ENCODE measurements at regions of chr4 and their contacts with region 1.

Region 1: GRCh38 chr4:112765317-112765975 is 128.5 kb downstream of the LARP7 start:
- DNase-seq: no peak
- H3K4me3 ChIP-seq: no peak overlapping the region
- H3K27ac ChIP-seq: no peak overlapping the region
- H3K27me3 ChIP-seq: no peaks in the 10 kb centered on the region
- CTCF ChIP-seq: peak; percentile 55

Region 2: DNA sequence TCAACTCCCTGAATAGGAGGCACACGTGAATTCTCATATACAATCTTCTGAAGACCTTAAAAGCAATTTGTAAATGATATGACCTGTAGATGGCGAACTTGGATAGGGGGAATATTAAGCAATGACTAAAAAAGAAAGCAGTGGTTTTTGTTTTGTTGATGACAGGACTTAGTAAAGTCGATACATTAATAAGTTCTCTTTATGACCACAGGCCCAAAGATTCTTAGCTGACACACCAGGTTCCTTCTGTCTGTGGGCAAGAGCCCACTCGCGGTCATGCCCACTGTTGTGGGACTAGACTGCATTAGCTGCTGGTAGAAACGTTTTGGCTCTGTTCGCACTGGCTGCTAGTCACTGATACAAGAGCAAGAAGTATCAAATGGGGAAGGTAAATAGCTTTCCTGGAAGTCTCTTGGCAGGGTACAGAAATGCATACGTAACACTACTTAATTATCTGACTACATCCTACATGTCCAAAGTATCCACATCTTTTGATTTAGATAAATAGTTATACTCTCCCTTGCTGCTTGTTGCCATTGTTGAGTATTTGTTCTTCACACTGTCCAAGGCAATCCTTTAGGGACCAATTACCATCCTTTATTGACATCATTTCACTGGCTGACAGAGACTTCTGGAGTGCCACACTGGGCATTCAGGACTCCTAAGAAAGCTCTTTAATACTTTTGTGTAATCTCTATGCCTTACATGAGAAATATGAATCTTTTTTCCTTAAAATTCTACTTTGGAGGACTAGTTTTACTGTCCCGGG is 437.3 kb before region 1 on chr4:
- CTCF ChIA-PET with region 1: interaction called, 17 read pairs
- POLR2A ChIA-PET with region 1: no interaction called
- DNase-seq: peak; percentile 29
- H3K4me3 ChIP-seq: no peak overlapping the region
- H3K27ac ChIP-seq: no peak overlapping the region
- H3K27me3 ChIP-seq: no peaks in the 10 kb centered on the region
- CTCF ChIP-seq: peak; percentile 69

Region 3: DNA sequence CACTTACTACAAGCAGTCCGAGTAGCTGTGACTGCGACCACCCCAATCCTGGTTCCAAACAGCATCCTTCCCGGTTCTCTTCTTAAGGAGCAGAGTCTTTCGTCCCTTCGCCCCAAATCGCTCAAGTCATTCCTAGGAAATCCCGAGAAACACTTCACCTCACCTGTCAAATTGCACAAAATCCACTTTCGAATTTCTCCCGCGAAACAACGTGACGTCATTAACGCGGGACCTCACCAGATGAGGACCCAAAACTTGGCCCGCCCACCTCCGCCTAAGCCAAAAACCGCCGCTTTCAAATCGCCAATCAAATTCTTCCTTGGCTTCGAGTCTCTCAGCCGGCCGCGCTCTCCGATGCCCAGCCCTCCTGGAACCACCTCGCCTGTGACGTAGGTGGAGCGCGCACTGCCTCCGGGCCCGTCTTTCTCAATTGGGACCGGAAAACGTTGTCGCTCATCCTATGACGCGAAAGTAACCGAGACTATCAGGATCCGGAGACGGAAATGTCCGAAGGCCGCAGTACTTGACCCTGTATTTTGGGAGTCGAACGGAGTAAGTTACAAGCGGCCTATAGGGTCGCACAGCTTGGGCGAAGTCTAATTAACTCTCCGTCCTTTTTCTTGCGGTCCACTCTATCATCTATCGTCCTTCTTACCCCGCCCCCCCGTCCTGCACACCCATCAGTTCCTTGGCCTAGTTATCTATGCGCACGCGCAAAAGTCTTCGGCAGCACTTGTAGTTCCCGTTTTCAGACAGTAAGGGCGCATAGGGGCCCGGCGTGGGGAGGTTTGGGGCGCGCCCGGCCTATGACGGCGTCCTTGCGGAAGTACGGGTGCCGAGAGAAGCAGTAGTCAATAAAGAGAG is 128.5 kb before region 1 on chr4 and contains the starts of genes LARP7 and ZGRF1:
- CTCF ChIA-PET with region 1: interaction called, 18 read pairs
- POLR2A ChIA-PET with region 1: no interaction called
- DNase-seq: peak; percentile 97
- H3K4me3 ChIP-seq: peak within 1 kb of the TSS; percentile 91
- H3K27ac ChIP-seq: peak within 1 kb of the TSS; percentile 96
- H3K27me3 ChIP-seq: no peaks in the 10 kb centered on the region
- CTCF ChIP-seq: peak; percentile 82
- polyA plus RNA-seq, gene LARP7: 22.8 and 44.2 TPM in 2 replicates
- polyA plus RNA-seq, gene ZGRF1: 1.4 and 2.0 TPM in 2 replicates

Region 4: DNA sequence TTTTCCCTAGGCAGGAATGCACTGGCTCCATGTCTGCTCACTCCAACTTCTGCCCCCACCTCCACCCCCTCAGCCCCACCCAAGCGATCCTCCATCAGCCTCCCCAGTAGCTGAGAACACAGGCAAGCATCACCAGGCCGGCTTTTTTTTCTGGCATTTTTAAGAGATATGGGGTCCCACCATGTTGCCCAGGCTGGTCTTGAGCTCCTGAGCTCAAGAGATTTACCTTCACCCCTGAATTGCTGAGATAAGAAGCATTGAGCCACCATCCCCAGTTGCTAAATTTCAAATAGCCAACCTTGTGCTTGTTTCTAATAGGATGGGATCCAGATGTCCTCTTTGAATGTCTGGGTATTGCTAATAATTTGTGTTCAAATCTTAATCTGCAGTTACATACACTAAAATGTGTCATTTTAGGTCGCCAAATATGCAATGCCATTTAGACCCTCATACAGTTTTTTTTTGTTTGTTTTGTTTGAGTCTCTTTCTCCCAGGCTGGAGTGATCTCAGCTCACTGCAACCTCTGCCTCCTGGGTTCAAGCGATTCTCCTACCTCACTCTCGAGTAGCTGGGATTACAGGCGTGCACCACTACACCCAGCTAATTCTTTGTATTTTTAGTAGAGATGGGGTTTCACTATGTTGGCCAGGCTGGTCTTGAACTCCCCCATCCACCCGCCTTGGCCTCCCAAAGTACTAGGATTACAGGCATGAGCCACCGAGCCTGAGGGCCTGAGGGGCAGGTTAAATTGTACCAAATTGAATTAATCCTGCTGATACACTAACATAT is 119.7 kb before region 1 on chr4:
- CTCF ChIA-PET with region 1: interaction called, 12 read pairs
- POLR2A ChIA-PET with region 1: no interaction called
- DNase-seq: no peak
- H3K4me3 ChIP-seq: no peak overlapping the region
- H3K27ac ChIP-seq: no peak overlapping the region
- H3K27me3 ChIP-seq: no peaks in the 10 kb centered on the region
- CTCF ChIP-seq: no peak

Region 5: DNA sequence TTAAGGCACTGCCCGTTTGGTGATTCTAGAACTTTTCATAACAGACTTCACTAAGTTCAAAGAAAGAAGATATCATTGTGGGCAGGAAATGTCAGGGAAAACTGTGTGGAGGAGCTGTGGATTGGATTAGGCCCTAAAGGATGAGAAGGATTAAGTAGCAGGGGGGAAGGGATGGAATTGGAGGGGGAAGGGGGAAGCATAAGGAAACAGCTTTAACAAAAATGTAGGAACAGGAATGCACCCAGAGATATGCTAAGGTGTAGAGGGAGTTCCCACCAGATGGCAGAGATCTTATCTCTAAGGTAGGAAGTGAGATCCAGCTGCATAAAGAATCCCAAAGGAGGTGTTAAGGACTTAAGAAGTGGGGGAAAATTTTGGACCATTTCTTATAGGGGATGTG is 14.0 kb before region 1 on chr4:
- CTCF ChIA-PET with region 1: interaction called, 10 read pairs
- POLR2A ChIA-PET with region 1: no interaction called
- DNase-seq: no peak
- H3K4me3 ChIP-seq: no peak overlapping the region
- H3K27ac ChIP-seq: no peak overlapping the region
- H3K27me3 ChIP-seq: no peaks in the 10 kb centered on the region
- CTCF ChIP-seq: no peak

Region 6: GRCh38 chr4:112775801-112776200 is 10.4 kb after region 1 on chr4:
- CTCF ChIA-PET with region 1: interaction called, 15 read pairs
- POLR2A ChIA-PET with region 1: no interaction called
- DNase-seq: no peak
- H3K4me3 ChIP-seq: no peak overlapping the region
- H3K27ac ChIP-seq: no peak overlapping the region
- H3K27me3 ChIP-seq: no peaks in the 10 kb centered on the region
- CTCF ChIP-seq: no peak

Region 7: GRCh38 chr4:112951362-112952312 is 186.2 kb after region 1 on chr4:
- CTCF ChIA-PET with region 1: interaction called, 18 read pairs
- POLR2A ChIA-PET with region 1: no interaction called
- DNase-seq: no peak
- H3K4me3 ChIP-seq: no peak overlapping the region
- H3K27ac ChIP-seq: no peak overlapping the region
- H3K27me3 ChIP-seq: no peaks in the 10 kb centered on the region
- CTCF ChIP-seq: peak; percentile 58

Region 8: GRCh38 chr4:112978691-112979472 is 213.4 kb after region 1 on chr4:
- CTCF ChIA-PET with region 1: no interaction called
- POLR2A ChIA-PET with region 1: no interaction called
- DNase-seq: no peak
- H3K4me3 ChIP-seq: no peak overlapping the region
- H3K27ac ChIP-seq: no peak overlapping the region
- H3K27me3 ChIP-seq: no peaks in the 10 kb centered on the region
- CTCF ChIP-seq: no peak